Endothelial cell of umbilical vein (primary cell): ENCODE measurements at regions of chr4 and their contacts with region 1.

Region 1: DNA sequence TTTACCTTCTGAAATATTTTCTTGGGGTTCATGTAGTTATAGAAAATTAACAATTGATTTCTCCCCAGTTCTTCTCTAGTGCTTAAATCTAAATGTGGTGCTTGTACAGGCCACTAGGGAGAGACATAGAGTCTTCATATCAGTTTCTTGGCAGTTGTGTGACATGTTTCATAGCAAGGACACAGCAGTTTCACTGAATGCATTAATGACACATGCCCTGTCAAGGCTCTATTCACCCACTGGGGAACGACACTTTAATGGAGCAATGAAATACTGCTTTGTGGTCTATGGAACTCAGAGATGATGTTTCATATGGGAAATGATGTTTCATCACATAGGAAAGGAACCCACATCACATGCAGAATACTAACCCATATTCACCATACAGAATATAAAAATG is 2.8 kb downstream of the VEGFC start:
- DNase-seq: peak; percentile 81
- H3K4me3 ChIP-seq: peak overlapping the region in 2 of 3 experiments; percentile 99 to 100
- H3K27ac ChIP-seq: peak overlapping the region; percentile 23
- H3K4me1 ChIP-seq: peaks cover 39% of the 10 kb centered on the region
- H3K27me3 ChIP-seq: no peaks in the 10 kb centered on the region
- CTCF ChIP-seq: peak; percentile 59 to 60
- POLR2A ChIP-seq: no peak

Region 2: DNA sequence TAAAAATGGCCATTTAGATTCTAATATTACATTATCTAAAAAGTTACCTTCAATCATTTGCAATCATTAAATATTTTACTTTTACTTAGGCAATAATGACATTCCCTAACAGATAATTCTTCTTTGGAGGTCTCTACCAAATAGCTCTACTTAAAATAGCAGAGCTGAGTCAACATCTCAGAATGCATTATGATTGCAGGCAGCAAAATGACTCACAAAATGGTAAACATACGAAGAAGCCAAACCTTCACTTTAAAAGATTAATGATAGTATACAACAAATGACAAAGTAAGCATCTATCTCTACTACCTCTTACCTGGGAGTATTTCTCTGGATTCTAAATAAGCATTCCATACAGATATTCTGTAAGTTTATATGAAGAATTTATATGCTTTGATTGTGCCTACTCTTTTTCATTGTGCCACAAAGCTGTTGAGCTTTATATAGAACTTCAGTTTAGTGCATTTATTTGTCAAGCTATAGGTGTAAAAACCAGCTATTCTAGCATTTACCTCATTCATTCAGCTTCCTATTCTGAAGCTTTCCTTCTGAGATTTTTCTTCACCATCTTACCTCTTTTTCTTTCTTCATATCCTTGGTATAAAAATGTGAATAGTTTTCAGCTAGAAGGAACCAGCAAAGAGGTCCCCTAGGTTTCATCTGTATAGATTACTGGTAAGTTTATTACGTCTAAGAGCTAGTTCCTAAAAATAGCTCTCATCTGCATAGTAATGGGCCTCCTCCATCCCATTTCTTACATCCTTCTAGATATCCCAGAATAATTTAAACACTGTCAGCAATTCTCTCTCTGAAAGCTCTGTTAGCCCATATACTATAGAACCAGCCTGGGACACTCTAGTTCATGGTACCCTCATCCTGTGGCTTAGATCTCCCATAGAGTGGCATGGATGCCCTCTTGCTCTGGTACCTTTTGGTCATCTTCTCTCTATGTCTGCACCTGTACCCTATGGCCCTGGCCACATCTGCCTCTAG is 487.4 kb before region 1 on chr4:
- CTCF ChIA-PET with region 1: no interaction called
- POLR2A ChIA-PET with region 1: no interaction called
- dilution Hi-C with region 1: no loop called
- intact Hi-C with region 1: no loop called
- DNase-seq: no peak
- H3K4me3 ChIP-seq: no peak overlapping the region
- H3K27ac ChIP-seq: no peak overlapping the region
- H3K4me1 ChIP-seq: no peaks in the 10 kb centered on the region
- H3K27me3 ChIP-seq: no peaks in the 10 kb centered on the region
- CTCF ChIP-seq: no peak
- POLR2A ChIP-seq: no peak

Region 3: GRCh38 chr4:176377780-176378179 is 412.2 kb before region 1 on chr4:
- CTCF ChIA-PET with region 1: interaction called, 3 read pairs
- POLR2A ChIA-PET with region 1: no interaction called
- dilution Hi-C with region 1: no loop called
- intact Hi-C with region 1: loop called (anchors 1 kb)
- DNase-seq: peak; percentile 39
- H3K4me3 ChIP-seq: no peak overlapping the region
- H3K27ac ChIP-seq: no peak overlapping the region
- H3K4me1 ChIP-seq: peaks cover under 1% of the 10 kb centered on the region
- H3K27me3 ChIP-seq: peaks cover 0 to 5% of the 10 kb centered on the region in 2 experiments
- CTCF ChIP-seq: peak in 1 of 2 donors; percentile 14
- POLR2A ChIP-seq: no peak

Region 4: GRCh38 chr4:176508780-176509331 is 281.1 kb before region 1 on chr4:
- CTCF ChIA-PET with region 1: no interaction called
- POLR2A ChIA-PET with region 1: no interaction called
- dilution Hi-C with region 1: no loop called
- intact Hi-C with region 1: no loop called
- DNase-seq: no peak
- H3K4me3 ChIP-seq: no peak overlapping the region
- H3K27ac ChIP-seq: no peak overlapping the region
- H3K4me1 ChIP-seq: no peaks in the 10 kb centered on the region
- H3K27me3 ChIP-seq: no peaks in the 10 kb centered on the region
- CTCF ChIP-seq: no peak
- POLR2A ChIP-seq: no peak

Region 5: DNA sequence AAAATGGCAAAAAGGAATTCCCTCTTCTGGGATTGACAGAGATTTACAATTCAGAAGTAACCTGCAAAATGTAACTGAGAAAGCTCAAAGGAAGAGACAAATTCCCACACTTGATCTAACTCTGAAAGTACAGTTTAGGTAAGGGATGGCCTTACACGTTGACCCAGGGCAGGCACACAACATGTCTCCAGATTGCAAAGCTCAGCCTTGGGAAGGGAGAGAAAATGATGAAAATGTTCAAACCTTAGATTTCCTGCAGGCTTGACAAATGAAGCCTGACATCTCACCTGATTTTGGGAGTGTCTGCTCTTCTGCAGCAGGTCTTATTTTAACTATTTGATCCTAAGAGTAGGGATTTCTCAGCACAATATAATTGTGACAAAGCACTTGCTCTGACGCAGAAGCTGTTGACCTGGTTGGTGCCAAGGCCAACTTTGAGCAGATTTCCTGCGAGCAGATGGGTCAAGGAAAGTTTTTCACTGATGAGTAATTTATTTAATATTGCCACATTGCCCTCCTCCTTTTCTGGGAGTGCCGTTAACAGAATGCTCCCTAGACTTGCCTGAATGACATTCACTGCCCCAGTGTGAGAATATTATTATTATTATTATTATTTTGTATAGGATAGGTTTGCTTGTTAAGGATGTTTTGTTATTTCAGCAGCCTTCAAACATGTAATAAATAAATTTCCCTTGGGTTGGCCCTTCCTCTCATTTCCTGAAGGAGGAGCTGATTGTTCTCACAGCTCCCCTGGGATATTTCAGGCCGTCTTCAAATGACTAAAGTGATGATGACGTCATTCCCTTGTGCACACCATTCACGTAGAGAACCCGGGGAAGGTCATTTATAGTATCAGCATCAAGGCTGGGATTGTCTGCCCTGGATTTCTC is 154.3 kb before region 1 on chr4:
- CTCF ChIA-PET with region 1: no interaction called
- POLR2A ChIA-PET with region 1: no interaction called
- dilution Hi-C with region 1: no loop called
- intact Hi-C with region 1: no loop called
- DNase-seq: peak; percentile 68
- H3K4me3 ChIP-seq: no peak overlapping the region
- H3K27ac ChIP-seq: peak overlapping the region; percentile 20
- H3K4me1 ChIP-seq: peaks cover 7% of the 10 kb centered on the region
- H3K27me3 ChIP-seq: no peaks in the 10 kb centered on the region
- CTCF ChIP-seq: no peak
- POLR2A ChIP-seq: no peak

Region 6: DNA sequence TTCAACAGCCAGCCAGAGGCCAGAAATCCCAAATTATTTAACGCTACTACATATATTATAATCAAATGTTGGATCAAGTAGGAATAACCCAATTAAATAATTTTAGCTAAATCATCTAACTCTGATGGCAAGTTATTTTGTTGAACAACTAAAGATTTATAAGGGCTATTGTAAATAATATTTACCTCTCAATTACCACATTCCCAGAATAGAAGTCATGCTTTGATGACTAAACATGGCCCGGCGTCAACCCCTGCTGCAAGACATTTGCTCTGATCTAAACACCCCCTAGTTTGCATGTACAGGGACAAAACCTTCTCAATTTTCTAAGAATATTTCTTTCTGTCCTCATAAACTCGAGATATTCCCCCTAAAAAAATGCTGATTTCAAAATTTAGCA is 11.5 kb before region 1 on chr4:
- CTCF ChIA-PET with region 1: interaction called, 6 read pairs
- POLR2A ChIA-PET with region 1: no interaction called
- dilution Hi-C with region 1: no loop called
- intact Hi-C with region 1: loop called (anchors 1 kb)
- DNase-seq: peak; percentile 64
- H3K4me3 ChIP-seq: no peak overlapping the region
- H3K27ac ChIP-seq: peak overlapping the region; percentile 80
- H3K4me1 ChIP-seq: peaks cover 52% of the 10 kb centered on the region
- H3K27me3 ChIP-seq: no peaks in the 10 kb centered on the region
- CTCF ChIP-seq: no peak
- POLR2A ChIP-seq: no peak

Region 7: GRCh38 chr4:176838611-176839433 is 48.9 kb after region 1 on chr4:
- CTCF ChIA-PET with region 1: interaction called, 5 read pairs
- POLR2A ChIA-PET with region 1: interaction called, 4 read pairs
- dilution Hi-C with region 1: no loop called
- intact Hi-C with region 1: loop called (anchors 1 kb)
- DNase-seq: peak; percentile 77
- H3K4me3 ChIP-seq: no peak overlapping the region
- H3K27ac ChIP-seq: peak overlapping the region; percentile 71
- H3K4me1 ChIP-seq: peaks cover 74% of the 10 kb centered on the region
- H3K27me3 ChIP-seq: no peaks in the 10 kb centered on the region
- CTCF ChIP-seq: no peak
- POLR2A ChIP-seq: no peak

Region 8: GRCh38 chr4:176902710-176903323 is 112.9 kb after region 1 on chr4:
- CTCF ChIA-PET with region 1: interaction called, 3 read pairs
- POLR2A ChIA-PET with region 1: no interaction called
- dilution Hi-C with region 1: no loop called
- intact Hi-C with region 1: loop called (anchors 5 kb)
- DNase-seq: peak; percentile 57
- H3K4me3 ChIP-seq: no peak overlapping the region
- H3K27ac ChIP-seq: peak overlapping the region; percentile 55
- H3K4me1 ChIP-seq: peaks cover 15% of the 10 kb centered on the region
- H3K27me3 ChIP-seq: no peaks in the 10 kb centered on the region
- CTCF ChIP-seq: no peak
- POLR2A ChIP-seq: no peak

Region 9: DNA sequence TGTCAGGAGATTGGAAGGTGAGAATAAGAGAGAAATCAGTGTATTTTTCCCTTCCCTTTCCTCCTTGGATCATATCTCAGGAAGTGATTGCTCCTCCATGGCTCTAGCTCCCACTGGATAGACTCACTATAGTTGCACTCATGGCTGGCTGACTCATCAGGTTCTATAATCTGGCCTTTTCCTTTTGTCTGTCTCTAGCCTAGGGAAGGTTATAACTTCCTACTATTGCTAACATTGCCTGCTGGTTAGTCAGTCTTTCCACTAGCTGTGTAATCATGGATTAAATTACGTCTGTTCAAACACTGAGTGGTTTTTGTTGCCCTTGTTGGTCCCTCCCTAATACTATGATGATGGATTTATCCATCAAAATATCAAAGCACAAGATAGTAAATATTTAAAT is 198.3 kb after region 1 on chr4:
- CTCF ChIA-PET with region 1: interaction called, 3 read pairs
- POLR2A ChIA-PET with region 1: no interaction called
- dilution Hi-C with region 1: no loop called
- intact Hi-C with region 1: loop called (anchors 2 kb)
- DNase-seq: peak; percentile 92
- H3K4me3 ChIP-seq: no peak overlapping the region
- H3K27ac ChIP-seq: peak overlapping the region; percentile 55
- H3K4me1 ChIP-seq: peaks cover 5% of the 10 kb centered on the region
- H3K27me3 ChIP-seq: no peaks in the 10 kb centered on the region
- CTCF ChIP-seq: no peak
- POLR2A ChIP-seq: no peak

Region 10: GRCh38 chr4:177322266-177322665 is 532.3 kb after region 1 on chr4:
- CTCF ChIA-PET with region 1: no interaction called
- POLR2A ChIA-PET with region 1: no interaction called
- dilution Hi-C with region 1: no loop called
- intact Hi-C with region 1: loop called (anchors 5 kb)
- DNase-seq: peak; percentile 71
- H3K4me3 ChIP-seq: peak overlapping the region in 2 of 3 experiments; percentile 6 to 51
- H3K27ac ChIP-seq: peak overlapping the region; percentile 21
- H3K4me1 ChIP-seq: peaks cover 13% of the 10 kb centered on the region
- H3K27me3 ChIP-seq: no peaks in the 10 kb centered on the region
- CTCF ChIP-seq: no peak
- POLR2A ChIP-seq: no peak